ENCODE measurements at regions of chr7 and their contacts with region 1.

Region 1: GRCh38 chr7:44477063-44477830 is 13.2 kb downstream of the NUDCD3 start:
- DNase-seq: peak; percentile 68 to 72 (median 69)
- H3K4me3 ChIP-seq: no peak overlapping the region
- H3K4me3 Mint-ChIP-seq: peak overlapping the region in 1 of 8 donors; percentile 46
- H3K27ac ChIP-seq: no peak overlapping the region
- H3K27ac Mint-ChIP-seq: peak overlapping the region in 5 of 7 donors; percentile 15 to 81 (median 70)
- H3K4me1 ChIP-seq: peaks cover 20% of the 10 kb centered on the region
- H3K4me1 Mint-ChIP-seq: peaks cover 27 to 58% (median 36%) of the 10 kb centered on the region in 4 donors
- H3K27me3 ChIP-seq: no peaks in the 10 kb centered on the region
- H3K27me3 Mint-ChIP-seq: no peaks in the 10 kb centered on the region

Region 2: DNA sequence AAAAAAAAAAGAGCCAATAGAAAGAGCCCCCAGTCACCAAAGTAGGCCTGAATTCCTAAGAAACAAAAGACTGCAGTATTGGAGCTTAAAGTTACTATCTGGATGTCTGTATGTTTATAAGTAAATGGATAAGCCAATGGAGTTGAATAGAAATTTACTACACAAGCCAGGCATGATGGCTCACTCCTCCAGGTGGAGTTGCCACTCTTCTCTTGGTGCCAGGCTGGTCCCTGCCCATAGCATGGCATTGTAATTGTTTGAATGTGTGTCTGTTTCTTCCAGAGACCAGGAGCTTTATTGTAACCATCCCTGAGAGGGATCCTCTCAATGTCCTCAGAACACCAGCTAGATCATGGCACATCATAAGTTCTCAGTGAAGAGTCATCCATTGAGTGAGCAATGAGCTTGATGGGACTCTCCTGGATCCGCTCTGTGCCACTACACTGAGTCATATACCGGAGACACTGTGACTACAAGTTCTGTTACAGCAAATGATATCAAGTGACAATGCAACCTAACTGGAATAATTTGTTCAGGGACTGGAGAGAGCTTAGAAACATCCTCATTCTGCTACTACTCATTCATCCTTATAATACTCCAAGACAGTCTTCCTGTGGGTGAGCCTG is 633.1 kb before region 1 on chr7:
- CTCF ChIA-PET with region 1: no interaction called
- POLR2A ChIA-PET with region 1: no interaction called
- intact Hi-C with region 1: no loop called
- DNase-seq: no peak
- H3K4me3 ChIP-seq: no peak overlapping the region
- H3K4me3 Mint-ChIP-seq: no peak overlapping the region
- H3K27ac ChIP-seq: no peak overlapping the region
- H3K27ac Mint-ChIP-seq: no peak overlapping the region
- H3K4me1 ChIP-seq: no peaks in the 10 kb centered on the region
- H3K4me1 Mint-ChIP-seq: peaks cover 0 to 2% (median under 1%) of the 10 kb centered on the region in 4 donors
- H3K27me3 ChIP-seq: no peaks in the 10 kb centered on the region
- H3K27me3 Mint-ChIP-seq: peaks cover 2 to 6% of the 10 kb centered on the region in 2 donors

Region 3: DNA sequence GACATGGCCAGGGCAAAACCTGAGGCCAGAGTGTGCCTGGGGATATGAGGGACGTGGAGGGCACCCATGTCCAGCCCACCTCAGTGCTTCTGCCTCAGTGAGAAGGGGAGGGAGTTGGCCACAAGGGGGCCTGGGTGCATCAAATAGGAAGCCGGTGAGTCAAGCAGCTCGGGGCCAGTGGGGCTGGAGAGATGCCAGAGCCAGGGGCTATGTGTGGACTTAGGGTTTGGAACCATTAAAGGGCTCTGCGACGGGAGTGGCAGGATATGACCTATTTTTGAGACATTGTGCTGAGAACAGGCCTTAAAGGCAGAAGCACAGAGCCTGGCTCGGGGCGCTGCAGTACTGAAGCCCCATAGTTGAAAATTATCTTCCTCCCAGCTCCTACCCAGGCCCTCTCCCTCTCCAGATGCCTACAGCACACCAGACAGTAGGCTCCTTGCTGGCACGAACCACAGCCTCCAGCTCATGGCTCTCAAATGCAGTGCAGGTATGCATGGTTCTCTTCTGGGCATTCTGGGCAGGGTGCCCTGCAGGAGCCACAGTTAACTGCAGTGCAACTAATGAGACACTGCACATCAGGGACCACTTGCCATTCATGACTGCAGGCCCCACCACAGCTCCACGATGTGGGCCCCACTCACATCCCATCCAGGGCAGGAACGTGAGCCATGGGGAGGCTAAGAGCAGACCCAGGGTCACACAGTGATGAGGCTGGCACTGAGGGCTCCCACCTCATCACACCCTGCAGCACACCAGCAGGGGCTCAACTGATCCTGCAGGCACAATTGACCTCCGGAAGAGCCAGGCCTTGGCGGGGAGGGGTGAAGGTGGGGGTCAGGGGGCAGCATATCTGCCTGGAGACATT is 404.6 kb before region 1 on chr7:
- CTCF ChIA-PET with region 1: no interaction called
- POLR2A ChIA-PET with region 1: no interaction called
- intact Hi-C with region 1: loop called (anchors 2 kb)
- DNase-seq: peak in 2 of 5 donors; percentile 25 to 35
- H3K4me3 ChIP-seq: no peak overlapping the region
- H3K4me3 Mint-ChIP-seq: no peak overlapping the region
- H3K27ac ChIP-seq: no peak overlapping the region
- H3K27ac Mint-ChIP-seq: peak overlapping the region; percentile 7 to 71 (median 48)
- H3K4me1 ChIP-seq: no peaks in the 10 kb centered on the region
- H3K4me1 Mint-ChIP-seq: peaks cover 4 to 20% (median 11%) of the 10 kb centered on the region in 4 donors
- H3K27me3 ChIP-seq: no peaks in the 10 kb centered on the region
- H3K27me3 Mint-ChIP-seq: no peaks in the 10 kb centered on the region

Region 4: DNA sequence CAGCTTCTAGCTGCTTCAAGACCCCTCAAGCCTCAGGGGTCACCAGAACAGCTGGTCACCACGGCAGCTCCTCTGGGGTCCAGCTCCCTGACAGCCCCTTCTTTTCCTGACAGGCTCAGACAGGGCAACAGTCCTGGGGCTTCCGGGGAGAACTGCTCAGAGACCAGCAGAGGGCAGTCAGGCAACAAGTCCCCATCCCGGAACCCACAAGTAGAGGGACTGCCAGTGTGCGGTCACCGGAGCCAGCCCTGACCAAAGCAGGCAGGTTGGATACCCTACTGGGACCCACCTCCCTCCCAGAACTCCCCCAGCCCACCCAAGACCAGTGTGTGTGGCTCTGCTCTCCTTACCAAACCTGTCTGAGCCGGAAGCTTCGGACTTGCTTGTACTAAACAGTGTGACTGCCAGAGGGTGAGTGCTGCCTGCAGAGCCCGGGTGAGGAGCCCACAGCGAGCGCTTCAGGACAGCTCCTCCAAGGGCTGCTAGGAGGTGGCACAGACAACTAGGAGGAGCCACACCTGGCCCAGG is 236.2 kb before region 1 on chr7:
- CTCF ChIA-PET with region 1: interaction called, 17 read pairs
- POLR2A ChIA-PET with region 1: no interaction called
- intact Hi-C with region 1: loop called (anchors 1 kb)
- DNase-seq: peak; percentile 54 to 63 (median 57)
- H3K4me3 ChIP-seq: no peak overlapping the region
- H3K4me3 Mint-ChIP-seq: peak overlapping the region in 7 of 8 donors; percentile 25 to 64 (median 52)
- H3K27ac ChIP-seq: no peak overlapping the region
- H3K27ac Mint-ChIP-seq: peak overlapping the region in 3 of 7 donors; percentile 19 to 59 (median 41)
- H3K4me1 ChIP-seq: no peaks in the 10 kb centered on the region
- H3K4me1 Mint-ChIP-seq: no peaks in the 10 kb centered on the region
- H3K27me3 ChIP-seq: no peaks in the 10 kb centered on the region
- H3K27me3 Mint-ChIP-seq: no peaks in the 10 kb centered on the region

Region 5: DNA sequence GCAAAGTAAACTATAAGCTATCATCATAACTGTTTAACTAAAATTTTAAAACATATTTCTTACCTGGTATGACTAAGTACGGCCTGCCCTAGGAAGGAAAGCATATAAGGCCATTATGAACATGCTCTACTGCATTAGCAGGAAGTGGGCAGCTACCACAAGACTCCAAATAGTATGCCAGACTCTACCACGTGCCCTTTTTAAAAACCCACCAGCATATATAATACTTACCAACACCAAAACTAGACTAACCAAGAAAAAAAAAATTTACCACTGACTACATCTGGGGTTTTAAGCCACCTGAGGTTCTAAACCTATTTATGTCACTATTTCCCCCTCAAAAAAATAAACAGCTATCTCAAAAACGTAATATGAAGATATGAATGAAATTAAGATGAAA is 16.9 kb before region 1 on chr7:
- CTCF ChIA-PET with region 1: interaction called, 12 read pairs
- POLR2A ChIA-PET with region 1: no interaction called
- intact Hi-C with region 1: no loop called
- DNase-seq: peak; percentile 87 to 90 (median 87)
- H3K4me3 ChIP-seq: no peak overlapping the region
- H3K4me3 Mint-ChIP-seq: peak overlapping the region; percentile 1 to 80 (median 60)
- H3K27ac ChIP-seq: peak overlapping the region; percentile 22
- H3K27ac Mint-ChIP-seq: peak overlapping the region; percentile 76 to 93 (median 89)
- H3K4me1 ChIP-seq: peaks cover 73% of the 10 kb centered on the region
- H3K4me1 Mint-ChIP-seq: peaks cover 50 to 82% (median 68%) of the 10 kb centered on the region in 4 donors
- H3K27me3 ChIP-seq: no peaks in the 10 kb centered on the region
- H3K27me3 Mint-ChIP-seq: no peaks in the 10 kb centered on the region

Region 6: DNA sequence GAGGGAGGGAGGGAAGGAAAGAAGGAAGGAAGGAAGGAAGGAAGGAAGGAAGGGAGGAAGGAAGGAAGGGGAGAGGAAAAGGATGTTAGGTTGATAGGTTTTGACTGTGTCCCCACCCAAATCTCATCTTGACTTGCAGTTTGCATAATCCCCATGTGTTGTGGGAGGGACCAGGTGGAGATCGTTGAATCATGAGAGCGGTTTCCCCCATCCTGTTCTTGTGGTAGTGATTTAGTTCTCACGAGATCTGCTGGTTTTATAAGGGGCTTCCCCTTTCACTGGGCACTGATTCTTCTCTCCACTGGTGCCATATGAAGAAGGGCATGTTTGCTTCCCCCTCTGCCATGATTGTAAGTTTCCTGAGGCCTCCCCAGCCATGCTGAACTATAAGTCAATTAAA is 28.3 kb after region 1 on chr7:
- CTCF ChIA-PET with region 1: no interaction called
- POLR2A ChIA-PET with region 1: no interaction called
- intact Hi-C with region 1: no loop called
- DNase-seq: peak in 1 of 5 donors; percentile 12
- H3K4me3 ChIP-seq: no peak overlapping the region
- H3K4me3 Mint-ChIP-seq: no peak overlapping the region
- H3K27ac ChIP-seq: no peak overlapping the region
- H3K27ac Mint-ChIP-seq: peak overlapping the region in 2 of 7 donors; percentile 10 to 63
- H3K4me1 ChIP-seq: no peaks in the 10 kb centered on the region
- H3K4me1 Mint-ChIP-seq: peaks cover 0 to 4% (median under 1%) of the 10 kb centered on the region in 4 donors
- H3K27me3 ChIP-seq: no peaks in the 10 kb centered on the region
- H3K27me3 Mint-ChIP-seq: peaks cover 2 to 5% of the 10 kb centered on the region in 2 donors

Region 7: GRCh38 chr7:45171946-45172345 is 694.7 kb after region 1 on chr7:
- CTCF ChIA-PET with region 1: no interaction called
- POLR2A ChIA-PET with region 1: no interaction called
- intact Hi-C with region 1: no loop called
- DNase-seq: no peak
- H3K4me3 ChIP-seq: no peak overlapping the region
- H3K4me3 Mint-ChIP-seq: peak overlapping the region in 1 of 8 donors; percentile 46
- H3K27ac ChIP-seq: no peak overlapping the region
- H3K27ac Mint-ChIP-seq: peak overlapping the region in 1 of 7 donors; percentile 42
- H3K4me1 ChIP-seq: no peaks in the 10 kb centered on the region
- H3K4me1 Mint-ChIP-seq: peaks cover 0 to 5% (median 0%) of the 10 kb centered on the region in 4 donors
- H3K27me3 ChIP-seq: no peaks in the 10 kb centered on the region
- H3K27me3 Mint-ChIP-seq: peaks cover 0 to 2% of the 10 kb centered on the region in 2 donors

Measured in CD4-positive, alpha-beta memory T cell (primary cell).